Posterior cingulate gyrus (tissue), 11 donors: ENCODE measurements at regions of chr12 and their contacts with region 1.

Region 1: GRCh38 chr12:48988030-48988649 is 10.0 kb downstream of the WNT1 start:
- DNase-seq: peak in 5 of 10 donors; percentile 70 to 94 (median 71)

Region 2: GRCh38 chr12:48512855-48513254 is 475.3 kb before region 1 on chr12:
- intact Hi-C with region 1: no loop called
- DNase-seq: no peak

Region 3: GRCh38 chr12:48960834-48961233 is 27.3 kb before region 1 on chr12:
- intact Hi-C with region 1: loop called (anchors 1 kb)
- DNase-seq: no peak